ENCODE measurements at regions of chr20 and their contacts with region 1.

Region 1: DNA sequence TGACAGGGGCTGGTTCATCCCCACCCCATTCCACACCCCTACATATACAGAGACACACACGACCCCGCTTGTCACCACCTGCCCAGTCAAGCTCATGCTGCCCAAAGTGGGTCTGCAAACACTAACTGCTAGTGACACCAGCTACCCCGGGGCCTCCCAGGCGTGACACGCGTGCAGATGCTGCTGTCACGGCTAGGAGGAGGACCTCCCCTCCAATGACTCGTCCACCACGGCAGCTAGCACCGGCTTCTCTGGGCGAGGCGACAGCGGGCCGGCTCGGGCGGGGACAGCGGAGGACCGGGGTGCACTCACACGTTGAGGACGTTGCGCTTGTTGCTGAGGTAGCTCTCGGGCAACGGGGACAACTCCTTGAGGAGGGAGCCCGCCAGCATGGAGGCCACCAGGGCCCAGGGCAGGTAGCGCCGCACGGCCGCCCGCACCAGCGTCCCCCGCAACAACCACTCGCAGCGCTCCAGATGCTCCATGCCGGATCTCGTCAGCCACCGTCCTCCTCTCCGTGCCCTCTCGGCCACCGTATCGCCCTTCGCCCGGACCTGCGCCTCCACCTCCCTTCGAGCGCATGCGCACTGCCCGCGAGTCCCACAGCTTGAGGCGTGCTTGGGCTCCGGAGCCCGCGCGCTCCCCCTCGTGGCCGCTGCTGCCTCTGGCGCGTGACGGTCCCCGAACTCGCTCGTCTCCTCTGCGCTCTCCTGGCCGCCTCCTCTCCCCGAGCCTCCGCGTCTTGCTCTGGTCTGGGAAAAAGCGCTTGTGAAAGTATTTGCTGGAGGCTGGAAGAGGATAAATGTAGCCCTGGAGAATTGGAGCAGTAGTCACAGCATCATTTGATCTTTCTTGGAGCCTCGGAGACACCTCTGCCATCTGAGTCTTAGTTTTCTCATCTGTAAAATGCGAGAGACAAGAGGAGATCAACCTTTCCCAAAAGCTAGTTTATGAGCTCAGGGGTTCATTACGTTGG is at the start of gene FITM2:
- H3K4me3 Mint-ChIP-seq: peak within 1 kb of the TSS; percentile 84
- H3K27ac Mint-ChIP-seq: peak within 1 kb of the TSS; percentile 79
- H3K4me1 Mint-ChIP-seq: peaks cover 19% of the 10 kb centered on the region
- H3K27me3 Mint-ChIP-seq: peaks cover 9% of the 10 kb centered on the region

Region 2: GRCh38 chr20:44217342-44218092 is 93.4 kb before region 1 on chr20:
- intact Hi-C with region 1: loop called (anchors 1 kb)
- H3K4me3 Mint-ChIP-seq: no peak overlapping the region
- H3K27ac Mint-ChIP-seq: no peak overlapping the region
- H3K4me1 Mint-ChIP-seq: peaks cover 26% of the 10 kb centered on the region
- H3K27me3 Mint-ChIP-seq: peaks cover 12% of the 10 kb centered on the region

Measured in dendritic cell treated with granulocyte-macrophage colony-stimulating factor and Interleukin-4, amounts not matched to agents 40 ng/mL and 50 ng/mL, for 4 days (primary cell).